ENCODE measurements at regions of chr17 and their contacts with region 1.

Region 1: DNA sequence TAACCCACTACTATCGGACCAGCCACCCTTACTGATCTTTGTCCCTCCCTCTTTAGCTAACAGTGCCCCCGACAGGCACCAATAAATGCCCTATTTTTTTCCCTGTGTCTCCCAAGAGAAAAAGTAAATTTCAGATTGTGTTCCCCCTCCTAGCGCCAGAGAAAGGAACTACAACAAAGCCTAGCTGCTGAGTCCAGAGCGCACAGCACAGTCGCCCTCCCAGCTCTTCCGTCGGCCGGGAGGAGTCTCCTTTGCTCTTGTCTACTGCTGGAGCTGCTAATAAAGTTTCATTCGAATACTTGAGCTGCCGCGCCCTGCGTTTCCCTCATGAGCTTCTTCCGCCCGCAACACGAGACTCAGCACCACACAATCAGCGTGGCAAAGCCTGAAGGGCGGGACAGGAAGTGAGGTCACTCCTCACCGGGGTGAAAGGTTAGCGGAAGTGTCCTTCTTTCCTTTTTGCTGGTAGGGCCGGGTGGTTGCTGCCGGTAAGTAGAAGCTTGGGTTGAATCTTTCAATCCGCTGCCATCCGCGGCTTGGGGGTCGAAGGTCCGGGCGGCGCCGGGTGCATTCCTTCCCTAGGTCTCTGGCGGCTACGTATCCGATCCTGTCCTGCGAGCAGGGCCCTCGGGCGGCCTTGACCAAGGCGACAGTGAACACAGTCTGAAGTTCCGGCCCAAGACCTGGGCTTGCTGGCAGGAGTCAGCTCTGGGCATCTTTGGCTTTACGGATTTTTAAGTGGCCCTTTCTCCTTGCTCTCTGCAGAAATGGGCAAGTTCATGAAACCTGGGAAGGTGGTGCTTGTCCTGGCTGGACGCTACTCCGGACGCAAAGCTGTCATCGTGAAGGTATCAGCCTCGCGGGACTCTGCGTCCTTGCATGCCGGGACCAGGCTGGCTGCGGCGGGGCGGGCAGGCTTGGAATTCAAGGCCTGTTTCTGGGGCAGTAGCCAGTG is at the start of gene RPL27:
- DNase-seq: peak; percentile 98
- ATAC-seq: peak; percentile 98
- H3K4me3 Mint-ChIP-seq: peak within 1 kb of the TSS; percentile 95
- H3K27ac Mint-ChIP-seq: peak within 1 kb of the TSS; percentile 99
- H3K4me1 Mint-ChIP-seq: peaks cover 31% of the 10 kb centered on the region
- H3K27me3 Mint-ChIP-seq: no peaks in the 10 kb centered on the region
- total RNA-seq, gene RPL27: 1,703 to 2,161 TPM

Region 2: GRCh38 chr17:42153919-42154742 is 844.1 kb before region 1 on chr17:
- CTCF ChIA-PET with region 1: no interaction called
- POLR2A ChIA-PET with region 1: no interaction called
- intact Hi-C with region 1: no loop called
- DNase-seq: no peak
- ATAC-seq: no peak
- H3K4me3 Mint-ChIP-seq: peak overlapping the region; percentile 97
- H3K27ac Mint-ChIP-seq: peak overlapping the region; percentile 93
- H3K4me1 Mint-ChIP-seq: peaks cover 31% of the 10 kb centered on the region
- H3K27me3 Mint-ChIP-seq: no peaks in the 10 kb centered on the region

Region 3: DNA sequence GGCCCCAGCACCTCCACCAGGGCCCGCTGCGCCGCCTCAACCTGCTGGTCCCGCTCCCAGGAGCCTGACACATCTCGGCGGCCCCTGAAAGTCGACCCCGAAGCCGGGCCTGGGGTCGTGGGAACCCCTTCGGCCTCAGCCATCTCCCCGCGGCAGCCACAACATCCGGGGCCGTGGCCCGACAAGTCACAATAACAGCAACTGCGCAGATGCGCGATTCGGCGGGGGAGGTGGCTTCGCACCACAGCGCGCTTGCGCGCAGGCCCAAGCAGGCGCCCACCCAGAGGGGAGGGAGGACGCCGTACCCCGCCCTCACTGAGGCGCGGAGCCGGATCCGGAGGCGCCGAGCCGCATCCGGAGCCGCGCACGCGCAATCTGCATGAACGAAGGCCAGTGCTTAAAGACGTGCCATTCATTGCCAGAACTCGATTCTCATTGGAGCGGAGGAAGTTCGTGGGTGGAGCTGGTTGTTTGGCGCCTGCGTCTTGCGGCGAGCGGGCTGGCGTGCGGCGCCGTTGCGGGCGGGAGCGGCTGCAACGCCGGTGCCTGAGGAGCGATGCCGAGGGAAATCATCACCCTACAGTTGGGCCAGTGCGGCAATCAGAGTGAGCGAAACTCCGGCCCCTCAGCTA is 389.0 kb before region 1 on chr17 and contains the starts of genes RETREG3 and TUBG1:
- CTCF ChIA-PET with region 1: interaction called, 3 read pairs
- POLR2A ChIA-PET with region 1: interaction called, 3 read pairs
- intact Hi-C with region 1: loop called in 1 of 2 experiments (anchors 1 kb)
- DNase-seq: peak; percentile 100
- ATAC-seq: peak; percentile 92
- H3K4me3 Mint-ChIP-seq: peak within 1 kb of the TSS; percentile 95
- H3K27ac Mint-ChIP-seq: peak within 1 kb of the TSS; percentile 97
- H3K4me1 Mint-ChIP-seq: peaks cover 35% of the 10 kb centered on the region
- H3K27me3 Mint-ChIP-seq: no peaks in the 10 kb centered on the region
- total RNA-seq, gene RETREG3: 28.3 to 30.9 TPM
- total RNA-seq, gene TUBG1: 76.1 to 102 TPM

Region 4: DNA sequence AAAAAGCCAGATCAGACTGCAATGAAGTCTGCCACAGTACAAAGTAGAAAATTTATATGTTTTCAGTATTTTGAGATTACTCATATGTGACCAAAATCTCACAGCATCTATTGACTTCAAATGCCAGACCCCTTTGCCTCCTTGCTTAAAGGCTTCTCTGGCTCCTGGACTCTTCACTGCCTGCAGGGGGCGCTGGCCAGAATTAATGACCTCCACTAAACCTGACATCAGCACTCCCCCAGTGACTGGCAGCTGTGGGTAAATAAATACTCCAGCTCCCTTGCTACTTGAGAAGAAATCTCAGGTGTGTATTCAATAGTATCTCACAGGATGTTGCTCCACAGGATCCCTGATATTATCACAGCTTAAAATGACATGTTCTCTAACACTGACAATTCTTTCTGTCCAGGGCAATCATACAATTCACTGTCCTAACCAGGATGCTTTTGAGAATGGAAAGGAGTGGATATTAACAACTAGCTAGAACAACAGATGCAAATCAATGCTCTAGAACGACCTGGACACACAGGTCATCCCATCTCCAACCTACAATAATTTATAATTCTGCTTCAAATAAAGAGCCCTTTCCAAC is 178.2 kb before region 1 on chr17:
- CTCF ChIA-PET with region 1: interaction called, 8 read pairs
- POLR2A ChIA-PET with region 1: interaction called, 5 read pairs
- intact Hi-C with region 1: loop called in 1 of 2 experiments (anchors 1 kb)
- DNase-seq: peak; percentile 86
- ATAC-seq: peak; percentile 56
- H3K4me3 Mint-ChIP-seq: no peak overlapping the region
- H3K27ac Mint-ChIP-seq: no peak overlapping the region
- H3K4me1 Mint-ChIP-seq: peaks cover 28% of the 10 kb centered on the region
- H3K27me3 Mint-ChIP-seq: no peaks in the 10 kb centered on the region

Region 5: GRCh38 chr17:42980398-42981397 is 17.6 kb before region 1 on chr17 and contains the start of gene RUNDC1:
- CTCF ChIA-PET with region 1: interaction called, 5 read pairs
- POLR2A ChIA-PET with region 1: interaction called, 3 read pairs
- intact Hi-C with region 1: loop called (anchors 1 kb)
- DNase-seq: peak; percentile 95
- ATAC-seq: peak; percentile 87
- H3K4me3 Mint-ChIP-seq: peak within 1 kb of the TSS; percentile 99
- H3K27ac Mint-ChIP-seq: peak within 1 kb of the TSS; percentile 98
- H3K4me1 Mint-ChIP-seq: peaks cover 32% of the 10 kb centered on the region
- H3K27me3 Mint-ChIP-seq: no peaks in the 10 kb centered on the region
- total RNA-seq, gene RUNDC1: 12.3 to 12.5 TPM

Region 6: DNA sequence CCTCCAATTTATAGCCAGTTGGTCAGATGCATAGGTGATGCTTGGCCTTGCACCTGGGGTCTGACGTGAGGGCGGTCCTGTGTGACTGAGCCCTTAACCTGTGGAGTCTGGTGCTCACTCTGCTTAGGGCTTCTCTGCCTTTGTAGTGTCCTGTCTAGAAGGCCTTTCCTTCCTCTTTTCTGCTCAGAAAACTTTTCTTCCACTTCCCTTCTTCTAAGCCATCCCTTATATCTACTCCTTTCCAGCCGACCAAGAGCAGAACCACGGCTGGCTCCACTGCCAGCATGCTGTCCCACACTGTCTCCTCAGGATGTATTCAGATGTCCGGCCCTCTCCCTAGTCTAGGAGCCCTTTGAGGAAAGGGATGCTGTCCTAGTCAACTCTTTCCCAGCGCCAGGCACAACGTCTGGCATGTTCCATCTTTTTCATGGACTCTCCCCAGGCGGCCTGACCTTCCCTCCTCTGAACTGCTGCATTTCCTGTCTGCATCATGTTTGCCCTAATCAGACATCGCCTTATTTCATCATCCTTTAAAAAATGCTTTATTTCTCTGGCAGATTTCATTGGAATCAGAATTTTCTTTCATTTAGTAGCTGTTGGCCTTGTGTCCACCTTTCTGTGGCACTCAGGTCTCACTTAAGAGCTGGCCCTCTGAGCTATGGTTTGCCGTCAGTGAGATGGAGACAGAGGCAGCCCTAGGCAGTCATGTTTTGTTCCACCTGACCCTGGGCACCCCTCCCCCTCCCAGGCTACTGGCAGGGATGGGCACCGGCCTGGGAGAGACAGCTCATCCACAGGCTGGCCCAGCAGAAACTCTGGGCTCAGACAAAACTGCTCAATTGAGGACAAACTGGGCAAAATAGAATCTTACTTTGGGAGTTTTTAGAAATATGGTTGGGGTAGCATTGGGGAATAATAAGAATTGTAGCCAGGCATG is 142.4 kb after region 1 on chr17:
- CTCF ChIA-PET with region 1: no interaction called
- POLR2A ChIA-PET with region 1: no interaction called
- intact Hi-C with region 1: no loop called
- DNase-seq: no peak
- ATAC-seq: no peak
- H3K4me3 Mint-ChIP-seq: no peak overlapping the region
- H3K27ac Mint-ChIP-seq: no peak overlapping the region
- H3K4me1 Mint-ChIP-seq: peaks cover 5% of the 10 kb centered on the region
- H3K27me3 Mint-ChIP-seq: no peaks in the 10 kb centered on the region

Region 7: DNA sequence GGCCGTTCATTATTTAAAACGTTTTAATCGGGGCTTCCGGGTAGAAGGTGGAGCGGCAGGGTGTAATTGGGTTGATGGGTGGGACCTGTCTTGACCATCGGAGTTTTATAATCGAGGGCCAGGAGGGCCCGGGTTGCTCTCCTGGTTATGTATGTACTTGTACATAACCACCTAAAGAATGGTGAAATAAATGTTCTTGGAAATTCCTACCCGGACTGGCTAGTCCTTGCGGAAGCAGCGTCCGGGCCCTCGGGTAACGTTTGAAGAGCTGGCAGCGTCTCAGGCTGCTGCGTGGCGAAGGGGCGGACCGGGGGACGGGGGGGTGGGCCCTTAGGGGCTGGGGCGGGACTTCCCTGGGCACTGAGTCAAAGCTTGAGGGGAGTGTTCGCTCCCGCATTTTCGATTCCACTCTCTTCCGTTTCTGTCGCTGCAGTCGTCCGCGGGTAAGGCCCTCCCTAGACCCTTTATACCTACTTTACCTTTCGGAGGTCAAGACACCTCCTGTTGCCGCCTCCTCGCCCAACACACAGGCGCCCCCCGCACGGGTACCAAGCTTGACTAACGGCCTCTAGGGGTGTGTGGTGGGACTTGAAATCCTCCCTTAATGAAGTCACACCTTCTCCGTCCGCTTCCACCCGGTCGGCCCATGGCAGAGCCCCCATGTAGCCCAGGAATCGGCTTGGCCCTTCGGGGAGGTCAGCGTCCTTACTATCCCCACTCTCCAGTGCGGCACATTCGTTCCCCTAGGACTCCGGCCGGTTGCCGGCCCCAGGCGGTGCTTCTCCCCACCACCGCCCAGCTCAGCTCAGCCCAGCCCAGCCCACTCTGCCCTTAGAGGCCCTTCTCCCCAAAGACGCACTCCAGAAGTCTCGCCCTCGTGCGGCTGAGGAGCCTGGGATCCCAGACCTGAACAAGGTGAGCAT is 213.5 kb after region 1 on chr17 and contains the start of gene TMEM106A:
- CTCF ChIA-PET with region 1: interaction called, 5 read pairs
- POLR2A ChIA-PET with region 1: interaction called, 3 read pairs
- intact Hi-C with region 1: loop called in 1 of 2 experiments (anchors 1 kb)
- DNase-seq: peak; percentile 88
- ATAC-seq: peak; percentile 92
- H3K4me3 Mint-ChIP-seq: peak within 1 kb of the TSS; percentile 83
- H3K27ac Mint-ChIP-seq: peak within 1 kb of the TSS; percentile 92
- H3K4me1 Mint-ChIP-seq: peaks cover 25% of the 10 kb centered on the region
- H3K27me3 Mint-ChIP-seq: no peaks in the 10 kb centered on the region
- total RNA-seq, gene TMEM106A: 10.7 to 10.8 TPM